Vagina (tissue), 2 donors: ENCODE measurements at regions of chr2 and their contacts with region 1.

Region 1: GRCh38 chr2:44955593-44956392 is 14.3 kb downstream of the SIX3 start:
- DNase-seq: no peak
- H3K4me3 ChIP-seq: peak overlapping the region; percentile 19 to 20
- H3K27ac ChIP-seq: peak overlapping the region; percentile 12
- H3K4me1 ChIP-seq: peaks cover 54% of the 10 kb centered on the region
- H3K27me3 ChIP-seq: peaks cover 6% of the 10 kb centered on the region
- CTCF ChIP-seq: peak; percentile 67 to 95 (median 92)
- POLR2A ChIP-seq: no peak

Region 2: GRCh38 chr2:44044281-44044720 is 911.5 kb before region 1 on chr2:
- intact Hi-C with region 1: loop called (anchors 10 kb)
- DNase-seq: peak in 1 of 2 donors; percentile 87
- H3K4me3 ChIP-seq: no peak overlapping the region
- H3K27ac ChIP-seq: no peak overlapping the region
- H3K4me1 ChIP-seq: peaks cover 6% of the 10 kb centered on the region
- H3K27me3 ChIP-seq: no peaks in the 10 kb centered on the region
- CTCF ChIP-seq: peak in 2 of 3 experiments; percentile 59 to 80
- POLR2A ChIP-seq: no peak

Region 3: DNA sequence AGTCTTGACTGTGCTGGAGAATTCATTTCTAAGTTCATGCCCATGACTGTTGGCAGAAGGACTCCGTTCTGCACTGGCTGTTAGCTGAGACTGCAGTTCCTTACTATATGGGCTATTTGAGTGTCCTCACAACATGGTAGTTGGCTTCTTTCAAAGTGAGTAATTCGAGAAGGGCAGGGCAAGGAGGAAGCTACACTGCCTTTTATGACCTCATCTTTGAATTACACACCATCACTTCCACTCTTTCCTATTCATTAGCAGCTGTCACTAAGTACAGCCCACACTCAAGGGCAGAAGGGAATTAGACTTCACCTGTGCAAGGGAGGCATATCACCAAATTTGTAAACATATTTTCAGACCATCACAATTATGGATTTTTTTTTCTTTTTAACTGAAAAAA is 1285.6 kb after region 1 on chr2:
- intact Hi-C with region 1: loop called (anchors 5 kb)
- DNase-seq: no peak
- H3K4me3 ChIP-seq: no peak overlapping the region
- H3K27ac ChIP-seq: no peak overlapping the region
- H3K4me1 ChIP-seq: no peaks in the 10 kb centered on the region
- H3K27me3 ChIP-seq: no peaks in the 10 kb centered on the region
- CTCF ChIP-seq: no peak
- POLR2A ChIP-seq: no peak